Right cardiac atrium (tissue), 5 donors: ENCODE measurements at regions of chr18 and their contacts with region 1.

Region 1: GRCh38 chr18:12038639-12039417 is 54.8 kb upstream of the ANKRD62 start:
- DNase-seq: peak; percentile 87 to 94 (median 94)
- ATAC-seq: peak; percentile 95 to 96
- H3K4me3 ChIP-seq: peak overlapping the region; percentile 47
- H3K27ac ChIP-seq: no peak overlapping the region
- H3K4me1 ChIP-seq: no peaks in the 10 kb centered on the region
- H3K27me3 ChIP-seq: no peaks in the 10 kb centered on the region

Region 2: GRCh38 chr18:11654736-11655605 is 383.9 kb before region 1 on chr18:
- intact Hi-C with region 1: loop called in 1 of 4 experiments (anchors 10 kb)
- DNase-seq: peak; percentile 52 to 84 (median 77)
- ATAC-seq: peak; percentile 66 to 83
- H3K4me3 ChIP-seq: no peak overlapping the region
- H3K27ac ChIP-seq: no peak overlapping the region
- H3K4me1 ChIP-seq: no peaks in the 10 kb centered on the region
- H3K27me3 ChIP-seq: no peaks in the 10 kb centered on the region

Region 3: DNA sequence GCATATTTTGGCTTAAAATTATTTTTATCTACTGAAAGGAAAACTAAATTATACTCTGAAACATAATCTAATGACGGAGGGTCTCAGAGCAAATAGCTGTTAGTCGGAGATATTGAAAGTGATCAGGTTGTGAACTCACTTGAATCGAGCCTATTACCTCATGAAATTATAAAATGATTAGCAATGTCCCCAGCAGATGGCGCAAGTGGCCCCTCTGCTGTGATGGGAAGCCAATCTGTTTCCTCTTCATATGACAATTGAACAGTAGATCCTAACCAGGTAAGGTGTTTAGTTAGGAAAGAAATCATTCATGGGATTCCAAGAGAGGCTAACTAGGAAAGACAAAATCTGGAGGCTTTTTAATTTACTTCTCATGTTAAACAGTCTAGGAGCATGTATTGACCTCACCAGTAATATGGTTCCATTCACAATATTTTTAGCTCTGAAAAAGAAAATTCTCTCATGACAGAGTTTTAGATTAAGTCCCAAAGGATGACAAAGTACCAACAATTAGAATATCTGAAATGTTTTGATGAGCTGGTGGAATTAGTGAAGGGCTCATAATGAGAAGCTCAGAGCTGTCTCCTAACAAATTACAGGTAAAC is 100.9 kb before region 1 on chr18:
- intact Hi-C with region 1: loop called in 3 of 4 experiments (anchors 5 kb)
- DNase-seq: peak; percentile 69 to 90 (median 84)
- ATAC-seq: peak; percentile 63 to 73
- H3K4me3 ChIP-seq: no peak overlapping the region
- H3K27ac ChIP-seq: no peak overlapping the region
- H3K4me1 ChIP-seq: no peaks in the 10 kb centered on the region
- H3K27me3 ChIP-seq: no peaks in the 10 kb centered on the region

Region 4: GRCh38 chr18:11951390-11951861 is 87.4 kb before region 1 on chr18:
- intact Hi-C with region 1: no loop called
- DNase-seq: no peak
- ATAC-seq: no peak
- H3K4me3 ChIP-seq: no peak overlapping the region
- H3K27ac ChIP-seq: no peak overlapping the region
- H3K4me1 ChIP-seq: peaks cover 2% of the 10 kb centered on the region
- H3K27me3 ChIP-seq: no peaks in the 10 kb centered on the region